Left ventricle myocardium inferior (tissue), 1 donor: ENCODE measurements at regions of chr16 and their contacts with region 1.

Region 1: DNA sequence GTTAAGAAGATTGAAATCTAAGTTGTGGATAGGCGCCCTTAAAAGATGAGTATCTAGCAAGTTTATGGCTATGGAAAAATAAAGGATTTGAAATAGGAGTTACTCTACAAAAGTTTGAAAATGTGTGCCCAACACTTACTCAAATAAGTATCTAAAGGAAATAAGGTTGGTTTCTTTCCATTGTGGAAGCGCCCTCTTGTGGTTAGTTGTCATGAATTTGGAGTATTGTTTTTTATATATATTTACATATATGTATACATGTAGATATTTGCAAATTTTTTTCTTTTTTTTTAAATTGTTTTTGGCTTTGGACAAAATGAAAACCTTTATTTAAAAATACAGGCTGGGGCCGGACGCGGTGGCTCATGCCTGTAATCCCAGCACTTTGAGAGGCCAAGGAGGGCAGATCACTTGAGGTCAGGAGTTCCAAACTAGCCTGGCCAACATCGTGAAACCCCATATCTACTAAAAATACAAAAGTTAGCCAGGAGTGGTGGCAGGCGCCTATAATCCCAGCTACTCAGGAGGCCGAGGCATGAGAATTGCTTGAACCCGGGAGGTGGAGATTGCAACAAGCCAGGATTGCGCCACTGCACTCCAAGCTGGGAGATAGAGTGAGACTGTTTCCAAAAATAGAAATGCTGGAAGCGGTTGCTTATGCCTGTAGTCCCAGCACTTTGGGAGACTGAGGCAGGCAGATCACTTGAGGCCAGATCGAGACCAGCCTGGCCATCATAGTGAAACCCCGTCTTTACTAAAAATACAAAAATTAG is 24.0 kb upstream of the VPS4A start:
- DNase-seq: peak; percentile 62
- H3K4me3 ChIP-seq: no peak overlapping the region
- H3K27ac ChIP-seq: peak overlapping the region; percentile 32
- H3K4me1 ChIP-seq: peaks cover 19% of the 10 kb centered on the region
- H3K27me3 ChIP-seq: no peaks in the 10 kb centered on the region
- CTCF ChIP-seq: peak; percentile 77

Region 2: DNA sequence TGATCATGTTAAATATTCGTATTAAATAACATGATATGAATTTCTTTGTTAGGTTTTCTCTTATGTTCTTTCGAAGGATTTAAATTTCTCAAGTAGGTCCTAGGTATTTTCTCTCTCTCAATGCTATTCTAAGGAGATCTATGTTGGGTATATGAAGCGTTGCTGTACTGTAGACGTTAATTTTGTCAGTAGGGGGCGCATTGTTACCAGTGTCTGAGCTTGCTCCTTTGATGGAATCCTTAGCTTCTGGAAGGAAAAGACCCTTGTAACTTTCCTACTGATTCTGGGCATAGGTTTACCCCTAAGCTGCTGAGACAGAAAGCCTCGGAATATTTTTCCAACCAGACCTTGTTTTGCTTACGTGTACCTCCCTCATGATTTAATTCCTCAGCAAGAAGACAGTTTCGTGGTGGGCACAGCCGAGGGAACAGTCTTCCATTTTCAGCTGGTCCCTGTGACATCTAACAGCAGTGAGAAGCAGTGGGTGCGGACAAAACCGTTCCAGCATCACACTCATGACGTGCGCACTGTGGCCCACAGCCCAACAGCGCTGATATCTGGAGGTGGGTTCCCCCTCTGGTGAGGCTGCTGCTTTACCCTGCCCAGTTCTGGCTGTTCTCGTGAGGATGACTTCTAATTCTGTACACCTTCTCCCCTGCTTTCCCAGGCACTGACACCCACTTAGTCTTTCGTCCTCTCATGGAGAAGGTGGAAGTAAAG is 136.8 kb before region 1 on chr16:
- intact Hi-C with region 1: loop called (anchors 2 kb)
- DNase-seq: no peak
- H3K4me3 ChIP-seq: no peak overlapping the region
- H3K27ac ChIP-seq: no peak overlapping the region
- H3K4me1 ChIP-seq: no peaks in the 10 kb centered on the region
- H3K27me3 ChIP-seq: no peaks in the 10 kb centered on the region
- CTCF ChIP-seq: peak; percentile 87